Left cardiac atrium (tissue), 4 donors: ENCODE measurements at regions of chr22 and their contacts with region 1.

Region 1: DNA sequence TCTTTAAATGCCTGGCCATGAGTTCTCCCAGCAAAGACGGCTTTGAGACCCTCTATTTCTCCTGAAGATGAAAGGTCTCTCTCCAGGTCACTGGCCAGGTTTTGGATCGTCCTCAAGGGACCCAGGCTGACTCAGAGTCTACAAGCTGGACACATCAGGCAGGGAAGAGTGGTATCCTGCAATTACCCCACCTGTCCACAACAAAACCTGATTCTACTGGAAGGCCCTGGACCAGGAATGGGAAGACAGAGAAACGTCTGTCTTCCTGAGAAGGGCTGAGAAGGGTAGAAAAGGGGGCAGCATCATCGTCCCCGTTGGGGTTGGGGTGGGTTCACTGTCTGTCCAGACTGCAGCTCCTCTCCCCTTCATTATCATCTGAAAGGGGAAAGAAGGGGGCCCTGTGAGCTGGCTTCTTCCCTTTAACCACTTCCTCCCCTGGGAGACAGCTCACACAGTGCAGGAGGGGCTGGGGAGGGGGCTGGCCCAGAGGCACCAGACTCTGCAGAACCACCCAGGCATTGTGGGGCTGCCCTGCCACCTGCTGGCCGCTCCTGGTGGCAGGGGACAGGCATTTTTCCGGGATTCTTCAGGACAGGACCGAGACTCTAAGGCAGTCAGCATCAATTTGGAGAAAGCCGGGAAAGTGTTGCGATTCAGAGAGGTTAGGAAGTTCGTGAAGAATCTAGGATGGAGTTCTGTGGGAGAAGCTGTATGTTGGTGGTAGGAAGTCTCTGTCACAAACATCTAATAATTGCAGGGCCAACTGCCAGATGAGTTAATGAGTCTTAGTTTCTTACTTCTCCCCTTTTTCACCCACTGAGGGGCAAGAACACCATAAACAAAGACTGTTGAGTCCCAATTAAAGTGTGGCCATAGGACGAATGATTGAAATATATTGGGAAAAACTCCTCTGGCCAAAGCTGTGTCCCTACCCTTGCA is 57.6 kb downstream of the SYN3 start:
- DNase-seq: peak; percentile 67
- ATAC-seq: peak; percentile 79 to 85

Region 2: DNA sequence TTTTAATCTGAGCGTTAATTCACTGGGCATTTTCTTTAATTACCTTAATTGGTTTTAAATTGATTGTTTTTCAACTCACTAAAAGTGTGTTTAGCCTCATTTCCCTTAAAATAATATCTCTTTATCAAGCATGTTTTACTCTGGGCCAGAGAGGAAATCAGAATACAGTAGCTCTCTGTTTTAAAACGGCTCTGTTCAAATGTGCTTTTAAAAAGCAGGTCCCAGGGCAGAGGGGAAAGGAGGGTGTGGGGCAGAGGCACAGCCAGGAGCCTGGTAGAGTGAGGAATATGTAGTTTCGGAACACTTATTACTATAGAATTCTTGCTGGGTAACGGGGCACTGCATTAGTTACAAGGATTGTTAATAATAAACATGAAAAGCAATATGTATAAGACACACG is 478.4 kb before region 1 on chr22:
- intact Hi-C with region 1: loop called in 1 of 2 experiments (anchors 5 kb)
- DNase-seq: no peak
- ATAC-seq: no peak

Region 3: GRCh38 chr22:32528984-32529982 is 471.3 kb before region 1 on chr22:
- intact Hi-C with region 1: loop called (anchors 1 to 5 kb)
- DNase-seq: peak; percentile 92
- ATAC-seq: peak; percentile 71 to 78

Region 4: GRCh38 chr22:32655068-32655467 is 345.5 kb before region 1 on chr22:
- intact Hi-C with region 1: loop called in 1 of 2 experiments (anchors 5 kb)
- DNase-seq: no peak
- ATAC-seq: no peak

Region 5: DNA sequence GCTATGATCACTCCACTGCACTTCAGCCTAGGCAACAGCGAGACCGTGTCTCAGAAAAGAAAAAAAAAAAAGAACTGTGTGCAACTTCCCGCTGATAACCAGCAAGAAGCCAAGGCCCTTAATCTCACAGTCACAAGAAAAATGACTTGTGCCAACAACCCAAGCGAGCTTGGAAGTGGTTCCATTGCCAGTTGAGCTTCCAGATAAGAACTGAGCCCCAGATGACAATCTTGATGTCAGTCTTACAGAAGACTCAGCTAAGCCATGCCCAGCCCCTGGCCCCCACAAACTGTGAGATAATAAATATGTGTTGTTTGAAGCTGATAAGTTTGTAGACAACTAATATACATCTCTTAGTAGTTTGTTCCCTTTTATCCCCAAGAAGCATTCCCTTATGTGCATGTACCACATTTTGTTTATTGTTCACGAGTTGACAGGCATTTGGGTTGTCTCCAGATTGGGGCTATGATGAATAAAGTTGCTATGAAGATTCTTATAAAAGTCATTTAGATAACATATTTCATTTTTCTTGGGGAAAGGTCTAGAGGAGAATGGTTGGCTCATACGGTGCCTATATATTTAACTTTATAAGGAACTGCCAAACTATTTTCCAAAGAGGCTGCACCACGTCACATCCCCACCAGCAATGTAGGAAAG is 113.2 kb before region 1 on chr22:
- intact Hi-C with region 1: no loop called
- DNase-seq: no peak
- ATAC-seq: no peak

Region 6: DNA sequence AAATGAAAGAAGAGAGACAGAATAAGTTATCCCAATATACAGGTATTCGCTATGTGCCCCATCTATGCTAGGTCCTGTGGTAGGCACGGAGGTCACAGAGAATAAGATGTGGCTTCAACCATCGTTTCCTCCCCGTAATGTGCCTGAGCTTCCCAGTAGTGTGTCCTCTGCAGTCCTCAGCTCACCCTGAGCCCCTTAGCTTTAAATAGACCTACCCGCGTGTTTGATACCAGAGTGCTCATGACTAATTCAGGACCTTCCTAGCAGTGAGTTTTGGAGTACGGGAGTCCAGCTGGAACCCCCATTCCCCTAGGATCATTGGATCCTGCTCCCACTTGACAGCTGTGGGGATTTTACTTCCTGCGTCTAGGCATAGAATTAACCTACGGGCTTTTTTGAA is 95.0 kb after region 1 on chr22:
- intact Hi-C with region 1: no loop called
- DNase-seq: no peak
- ATAC-seq: no peak